ENCODE measurements at regions of chr22 and their contacts with region 1.

Region 1: DNA sequence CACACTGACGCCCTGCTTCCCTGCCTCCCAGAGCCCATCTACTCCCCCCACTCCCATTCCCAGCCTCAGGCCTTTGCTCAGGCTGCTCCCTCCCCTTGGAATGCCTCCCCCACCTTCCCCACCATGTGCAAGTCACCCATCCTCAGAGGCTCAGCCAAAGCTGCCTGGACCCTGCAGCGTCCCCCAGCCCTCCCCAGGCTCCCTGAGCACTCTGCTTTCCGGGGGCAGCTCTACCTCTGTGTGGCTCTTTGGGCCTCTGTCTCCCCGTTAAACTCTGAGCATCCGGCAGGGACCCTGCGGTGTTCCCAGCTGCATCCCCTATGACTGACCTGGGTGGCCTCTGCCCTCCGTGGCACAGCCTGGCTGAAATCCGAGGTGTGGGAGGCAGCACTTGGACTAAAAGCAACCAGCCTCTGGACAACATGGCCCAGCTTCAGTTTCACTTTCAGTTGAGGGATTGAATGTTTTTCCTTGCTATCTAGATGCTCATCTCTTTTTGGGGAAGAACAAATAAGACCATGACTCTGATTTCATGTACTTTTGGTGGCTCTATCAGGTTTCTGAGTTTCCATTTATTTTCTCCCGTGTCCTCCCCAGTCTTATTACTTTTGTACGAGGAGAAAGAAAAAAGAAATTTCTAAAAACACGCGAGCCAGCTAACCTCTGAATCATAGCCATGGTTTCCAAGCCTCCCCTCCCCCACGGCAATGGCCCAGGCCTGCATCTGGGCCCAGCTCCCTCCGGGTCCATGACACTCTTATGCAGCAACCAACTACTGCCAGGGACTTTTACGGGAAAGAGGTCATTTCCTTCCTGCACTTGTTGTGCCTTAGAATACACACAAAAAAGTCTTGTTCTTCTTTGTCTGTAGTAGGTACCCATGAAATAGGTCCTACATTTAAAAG is 3.8 kb downstream of the APOL3 start:
- DNase-seq: peak; percentile 11
- H3K4me3 ChIP-seq: peak overlapping the region; percentile 35 to 67 (median 46)
- H3K27ac ChIP-seq: peak overlapping the region; percentile 89 to 96 (median 92)
- H3K4me1 ChIP-seq: peaks cover 46 to 96% (median 63%) of the 10 kb centered on the region in 3 donors
- H3K27me3 ChIP-seq: no peaks in the 10 kb centered on the region
- CTCF ChIP-seq: no peak
- POLR2A ChIP-seq: peak in 1 of 4 donors; percentile 49

Region 2: GRCh38 chr22:35648066-35649025 is 508.4 kb before region 1 on chr22 and contains the start of gene APOL6:
- intact Hi-C with region 1: no loop called
- DNase-seq: no peak
- H3K4me3 ChIP-seq: peak within 1 kb of the TSS; percentile 56 to 88 (median 70)
- H3K27ac ChIP-seq: peak within 1 kb of the TSS; percentile 90 to 98 (median 96)
- H3K4me1 ChIP-seq: peaks cover 6 to 57% (median 25%) of the 10 kb centered on the region in 3 donors
- H3K27me3 ChIP-seq: no peaks in the 10 kb centered on the region
- CTCF ChIP-seq: peak in 1 of 6 experiments; percentile 7
- POLR2A ChIP-seq: peak in 2 of 4 donors; percentile 29 to 42
- total RNA-seq, gene APOL6: 7.8 to 22.3 (median 9.5) TPM

Region 3: GRCh38 chr22:36221799-36222751 is 65.3 kb after region 1 on chr22:
- intact Hi-C with region 1: loop called (anchors 10 kb)
- DNase-seq: no peak
- H3K4me3 ChIP-seq: no peak overlapping the region
- H3K27ac ChIP-seq: no peak overlapping the region
- H3K4me1 ChIP-seq: peaks cover 0 to 14% (median 3%) of the 10 kb centered on the region in 3 donors
- H3K27me3 ChIP-seq: peaks cover 0 to 5% (median 0%) of the 10 kb centered on the region in 4 donors
- CTCF ChIP-seq: peak; percentile 27 to 77 (median 62)
- POLR2A ChIP-seq: no peak

Region 4: GRCh38 chr22:36454916-36455570 is 298.3 kb after region 1 on chr22:
- intact Hi-C with region 1: no loop called
- DNase-seq: peak; percentile 59
- H3K4me3 ChIP-seq: peak overlapping the region; percentile 43 to 71 (median 52)
- H3K27ac ChIP-seq: peak overlapping the region; percentile 79 to 94 (median 90)
- H3K4me1 ChIP-seq: peaks cover 25 to 78% (median 52%) of the 10 kb centered on the region in 3 donors
- H3K27me3 ChIP-seq: no peaks in the 10 kb centered on the region
- CTCF ChIP-seq: peak in 3 of 6 experiments; percentile 7 to 30 (median 22)
- POLR2A ChIP-seq: peak in 3 of 4 donors; percentile 51 to 93 (median 75)

Measured in esophagus squamous epithelium (tissue), 5 donors.